ENCODE measurements at regions of chr1 and their contacts with region 1.

Region 1: GRCh38 chr1:39098546-39099250 is 72.5 kb downstream of the NDUFS5 start:
- DNase-seq: peak in 33 of 35 experiments; percentile 29 to 84 (median 51)
- ATAC-seq: peak; percentile 71 to 82 (median 78)
- H3K4me3 ChIP-seq: no peak overlapping the region
- H3K4me3 Mint-ChIP-seq: no peak overlapping the region
- H3K27ac ChIP-seq: no peak overlapping the region
- H3K27ac Mint-ChIP-seq: peak overlapping the region; percentile 11 to 25
- H3K4me1 ChIP-seq: peaks cover 7 to 13% of the 10 kb centered on the region in 2 experiments
- H3K4me1 Mint-ChIP-seq: peaks cover 23 to 25% (median 24%) of the 10 kb centered on the region in 3 donors
- H3K27me3 ChIP-seq: no peaks in the 10 kb centered on the region
- H3K27me3 Mint-ChIP-seq: no peaks in the 10 kb centered on the region

Region 2: GRCh38 chr1:38804062-38804886 is 294.4 kb before region 1 on chr1:
- CTCF ChIA-PET with region 1: no interaction called
- POLR2A ChIA-PET with region 1: no interaction called
- DNase-seq: no peak
- ATAC-seq: no peak
- H3K4me3 ChIP-seq: peak overlapping the region in 1 of 2 donors; percentile 36
- H3K4me3 Mint-ChIP-seq: peak overlapping the region in 2 of 3 donors; percentile 34 to 73
- H3K27ac ChIP-seq: no peak overlapping the region
- H3K27ac Mint-ChIP-seq: no peak overlapping the region
- H3K4me1 ChIP-seq: peaks cover 0 to 2% of the 10 kb centered on the region in 2 experiments
- H3K4me1 Mint-ChIP-seq: peaks cover 5 to 9% (median 7%) of the 10 kb centered on the region in 3 donors
- H3K27me3 ChIP-seq: peaks cover 23 to 49% of the 10 kb centered on the region in 2 experiments
- H3K27me3 Mint-ChIP-seq: peaks cover 64 to 66% of the 10 kb centered on the region in 2 donors

Region 3: DNA sequence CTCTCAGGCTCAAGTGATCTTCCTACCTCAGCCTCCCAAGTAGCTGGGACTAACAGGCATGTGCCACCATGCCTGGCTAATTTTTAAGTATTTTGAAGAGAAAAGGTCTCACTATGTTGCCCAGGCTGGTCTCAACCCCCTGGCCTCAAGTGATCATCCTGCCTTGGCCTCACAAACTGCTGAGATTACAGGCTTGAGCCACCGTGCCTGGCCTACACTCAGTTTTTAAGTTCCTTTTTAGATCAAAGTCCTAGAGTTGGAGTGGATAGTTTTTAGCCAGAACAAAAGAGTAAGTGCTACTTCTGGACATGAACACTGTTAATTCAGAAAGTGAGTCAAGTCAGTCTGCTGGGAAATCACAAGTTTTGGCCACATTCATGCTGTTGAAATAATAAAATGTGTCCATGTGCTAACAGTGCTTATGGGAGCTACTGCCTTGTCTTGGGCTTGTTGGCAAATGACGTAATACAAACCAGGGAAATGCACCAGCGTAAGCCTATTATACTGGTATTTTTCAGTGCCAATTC is 11.7 kb after region 1 on chr1:
- CTCF ChIA-PET with region 1: interaction called, 4 to 10 read pairs
- POLR2A ChIA-PET with region 1: no interaction called
- DNase-seq: no peak
- ATAC-seq: no peak
- H3K4me3 ChIP-seq: no peak overlapping the region
- H3K4me3 Mint-ChIP-seq: no peak overlapping the region
- H3K27ac ChIP-seq: no peak overlapping the region
- H3K27ac Mint-ChIP-seq: no peak overlapping the region
- H3K4me1 ChIP-seq: peaks cover 0 to 9% of the 10 kb centered on the region in 2 experiments
- H3K4me1 Mint-ChIP-seq: peaks cover 0 to 8% (median 8%) of the 10 kb centered on the region in 3 donors
- H3K27me3 ChIP-seq: peaks cover 0 to 8% of the 10 kb centered on the region in 2 experiments
- H3K27me3 Mint-ChIP-seq: peaks cover 7% of the 10 kb centered on the region in 2 donors

Region 4: DNA sequence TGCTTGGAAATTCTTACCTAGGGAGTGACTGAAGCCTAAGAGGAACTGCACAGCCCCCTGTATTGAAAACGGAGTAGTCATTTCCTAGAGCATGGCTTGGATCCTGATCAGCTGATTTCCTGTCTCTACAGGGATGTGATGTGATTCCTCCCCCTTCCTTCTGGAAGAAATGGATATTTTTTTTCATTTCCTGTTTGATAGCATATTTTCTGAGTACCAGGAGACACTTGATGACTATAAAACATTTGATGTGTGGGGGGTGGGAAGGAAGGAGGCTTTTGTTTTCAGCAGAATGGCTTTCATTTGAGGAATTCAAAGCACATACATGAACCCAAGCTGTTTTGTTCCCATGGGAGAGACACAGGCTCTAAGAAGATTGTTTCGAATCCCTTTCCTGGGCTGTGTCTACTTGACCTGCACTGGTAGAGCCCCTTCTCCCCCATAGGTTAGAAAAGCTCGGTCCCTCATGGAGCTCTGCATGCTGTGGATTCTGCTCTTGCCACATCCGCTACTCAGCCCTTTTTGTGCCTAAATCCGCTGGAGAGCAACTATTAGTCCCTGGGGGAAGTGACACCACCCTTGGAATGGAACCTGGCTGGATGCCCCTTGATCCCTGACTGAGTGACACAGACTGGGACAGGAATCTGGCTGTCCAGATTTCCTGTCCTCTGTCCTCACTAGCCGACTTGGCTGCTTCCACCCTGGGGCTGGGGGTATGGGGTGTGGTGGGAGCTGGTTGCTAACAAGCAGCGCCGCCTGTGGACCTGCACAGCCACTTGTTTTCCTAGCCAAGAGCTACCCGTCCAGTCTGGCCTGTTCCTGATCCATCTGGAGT is 34.0 kb after region 1 on chr1:
- CTCF ChIA-PET with region 1: no interaction called
- POLR2A ChIA-PET with region 1: interaction called in 1 of 2 experiments, 10 read pairs
- DNase-seq: no peak
- ATAC-seq: no peak
- H3K4me3 ChIP-seq: no peak overlapping the region
- H3K4me3 Mint-ChIP-seq: no peak overlapping the region
- H3K27ac ChIP-seq: no peak overlapping the region
- H3K27ac Mint-ChIP-seq: no peak overlapping the region
- H3K4me1 ChIP-seq: no peaks in the 10 kb centered on the region
- H3K4me1 Mint-ChIP-seq: peaks cover 0 to 8% (median 6%) of the 10 kb centered on the region in 3 donors
- H3K27me3 ChIP-seq: no peaks in the 10 kb centered on the region
- H3K27me3 Mint-ChIP-seq: no peaks in the 10 kb centered on the region

Region 5: GRCh38 chr1:39167632-39168209 is 69.0 kb after region 1 on chr1:
- CTCF ChIA-PET with region 1: no interaction called
- POLR2A ChIA-PET with region 1: interaction called in 1 of 2 experiments, 12 read pairs
- DNase-seq: no peak
- ATAC-seq: no peak
- H3K4me3 ChIP-seq: no peak overlapping the region
- H3K4me3 Mint-ChIP-seq: no peak overlapping the region
- H3K27ac ChIP-seq: no peak overlapping the region
- H3K27ac Mint-ChIP-seq: no peak overlapping the region
- H3K4me1 ChIP-seq: no peaks in the 10 kb centered on the region
- H3K4me1 Mint-ChIP-seq: no peaks in the 10 kb centered on the region
- H3K27me3 ChIP-seq: peaks cover 0 to 5% of the 10 kb centered on the region in 2 experiments
- H3K27me3 Mint-ChIP-seq: no peaks in the 10 kb centered on the region

Region 6: GRCh38 chr1:39258146-39258924 is 159.6 kb after region 1 on chr1:
- CTCF ChIA-PET with region 1: interaction called, 7 to 18 read pairs
- POLR2A ChIA-PET with region 1: no interaction called
- DNase-seq: peak; percentile 8 to 84 (median 52)
- ATAC-seq: peak; percentile 66 to 70 (median 68)
- H3K4me3 ChIP-seq: no peak overlapping the region
- H3K4me3 Mint-ChIP-seq: no peak overlapping the region
- H3K27ac ChIP-seq: peak overlapping the region; percentile 33
- H3K27ac Mint-ChIP-seq: peak overlapping the region in 1 of 2 donors; percentile 80
- H3K4me1 ChIP-seq: peaks cover 9 to 10% of the 10 kb centered on the region in 2 experiments
- H3K4me1 Mint-ChIP-seq: peaks cover 25 to 42% (median 33%) of the 10 kb centered on the region in 3 donors
- H3K27me3 ChIP-seq: no peaks in the 10 kb centered on the region
- H3K27me3 Mint-ChIP-seq: no peaks in the 10 kb centered on the region

Region 7: GRCh38 chr1:39408641-39409054 is 309.9 kb after region 1 on chr1:
- CTCF ChIA-PET with region 1: interaction called, 4 to 14 read pairs
- POLR2A ChIA-PET with region 1: no interaction called
- DNase-seq: peak; percentile 63 to 89 (median 75)
- ATAC-seq: peak; percentile 84 to 90 (median 87)
- H3K4me3 ChIP-seq: peak overlapping the region; percentile 51 to 62
- H3K4me3 Mint-ChIP-seq: peak overlapping the region; percentile 85 to 89 (median 87)
- H3K27ac ChIP-seq: no peak overlapping the region
- H3K27ac Mint-ChIP-seq: no peak overlapping the region
- H3K4me1 ChIP-seq: peaks cover 0 to 29% of the 10 kb centered on the region in 2 experiments
- H3K4me1 Mint-ChIP-seq: peaks cover 60 to 68% (median 65%) of the 10 kb centered on the region in 3 donors
- H3K27me3 ChIP-seq: no peaks in the 10 kb centered on the region
- H3K27me3 Mint-ChIP-seq: no peaks in the 10 kb centered on the region